Activated T-helper 1 cell treated with anti-CD3 and anti-CD28 coated beads, Interleukin-12 subunit alpha, Interleukin-12 subunit beta, Interleukin-2, Interleukin-4 antibody, amounts not matched to agents 30 ng/mL and 10 ng/mL and 1 ng/mL, durations not matched to agents 14 hours and 24 hours and 36 hours (primary cell): ENCODE measurements at regions of chr13 and their contacts with region 1.

Region 1: GRCh38 chr13:37049810-37050209 is 9.7 kb downstream of the SUPT20H start:
- DNase-seq: no peak
- H3K4me3 Mint-ChIP-seq: no peak overlapping the region
- H3K27ac Mint-ChIP-seq: no peak overlapping the region
- H3K4me1 Mint-ChIP-seq: peaks cover 21% of the 10 kb centered on the region
- H3K27me3 Mint-ChIP-seq: no peaks in the 10 kb centered on the region

Region 2: DNA sequence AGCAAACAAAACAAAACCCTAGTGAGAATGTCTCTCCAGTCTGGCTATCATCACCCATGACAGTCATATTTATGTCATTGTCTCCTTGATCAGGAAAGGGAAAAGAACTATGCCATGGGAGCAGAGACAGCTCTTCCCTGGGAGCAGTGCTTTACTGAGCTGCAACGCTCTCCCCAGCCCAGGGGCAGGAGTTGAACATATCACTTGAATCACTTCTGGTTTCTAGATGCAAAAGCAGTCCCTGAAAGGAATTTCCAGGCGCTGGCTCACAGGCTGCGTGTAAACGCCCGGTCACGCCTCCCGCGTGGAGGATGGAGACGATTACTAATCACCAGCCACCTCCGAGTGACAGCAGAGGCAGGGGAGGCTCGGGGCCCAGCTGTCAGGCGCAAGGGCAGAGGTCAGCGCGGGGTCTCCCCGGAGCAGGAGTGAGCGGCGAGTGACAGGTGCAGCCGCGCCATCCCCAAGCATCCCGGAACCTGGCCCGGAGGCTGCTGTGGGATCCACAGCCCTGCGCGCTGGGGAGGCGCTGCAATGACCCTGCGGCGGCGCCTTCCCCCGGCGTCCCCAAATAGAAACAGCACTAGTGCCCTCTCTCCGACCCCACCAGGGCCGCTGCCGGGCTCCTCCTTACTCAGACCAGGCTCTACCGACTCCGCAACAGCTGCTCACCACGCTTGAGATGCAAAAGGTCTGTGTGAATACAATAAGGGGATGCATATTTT is 895.1 kb before region 1 on chr13:
- intact Hi-C with region 1: loop called (anchors 5 kb)
- DNase-seq: no peak
- H3K4me3 Mint-ChIP-seq: no peak overlapping the region
- H3K27ac Mint-ChIP-seq: no peak overlapping the region
- H3K4me1 Mint-ChIP-seq: no peaks in the 10 kb centered on the region
- H3K27me3 Mint-ChIP-seq: peaks cover 3% of the 10 kb centered on the region

Region 3: DNA sequence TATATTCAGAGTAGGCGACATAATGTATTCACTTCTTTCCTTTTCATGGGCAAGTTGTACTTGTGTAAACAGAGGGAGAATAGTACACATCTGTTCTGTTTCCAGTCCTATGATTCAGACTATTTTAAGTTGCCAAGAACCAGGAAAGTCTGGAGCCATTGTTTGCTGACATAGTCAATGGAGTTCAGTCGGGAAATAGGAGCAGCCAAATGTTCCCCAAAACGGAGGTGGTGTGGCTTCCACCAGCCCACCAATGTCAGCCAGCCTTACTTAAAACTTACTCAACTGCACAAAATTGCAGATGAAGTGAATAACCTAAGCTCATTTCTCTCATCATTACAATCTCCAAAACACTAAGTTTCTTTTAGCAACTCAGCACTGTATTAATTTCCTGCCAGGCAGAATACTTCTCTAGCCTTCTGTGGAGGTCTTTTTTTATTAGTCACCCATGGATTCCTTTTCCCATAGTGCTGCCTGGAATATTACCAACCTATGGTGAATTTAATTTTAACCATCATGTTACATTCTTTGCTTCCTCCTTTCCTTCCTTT is 78.0 kb after region 1 on chr13:
- intact Hi-C with region 1: no loop called
- DNase-seq: no peak
- H3K4me3 Mint-ChIP-seq: no peak overlapping the region
- H3K27ac Mint-ChIP-seq: no peak overlapping the region
- H3K4me1 Mint-ChIP-seq: no peaks in the 10 kb centered on the region
- H3K27me3 Mint-ChIP-seq: peaks cover 1% of the 10 kb centered on the region